CD14-positive monocyte (primary cell): ENCODE measurements at regions of chr1 and their contacts with region 1.

Region 1: GRCh38 chr1:226634166-226634588 is 85.6 kb downstream of the STUM start:
- DNase-seq: peak; percentile 58 to 77 (median 76)
- H3K4me3 ChIP-seq: no peak overlapping the region
- H3K4me3 Mint-ChIP-seq: no peak overlapping the region
- H3K27ac ChIP-seq: peak overlapping the region in 1 of 2 donors; percentile 38
- H3K27ac Mint-ChIP-seq: peak overlapping the region in 4 of 7 donors; percentile 20 to 73 (median 51)
- H3K4me1 ChIP-seq: peaks cover 0 to 9% of the 10 kb centered on the region in 2 donors
- H3K4me1 Mint-ChIP-seq: peaks cover 17% of the 10 kb centered on the region
- H3K27me3 ChIP-seq: no peaks in the 10 kb centered on the region
- H3K27me3 Mint-ChIP-seq: peaks cover 0 to 1% (median 1%) of the 10 kb centered on the region in 3 donors
- CTCF ChIP-seq: peak; percentile 96

Region 2: DNA sequence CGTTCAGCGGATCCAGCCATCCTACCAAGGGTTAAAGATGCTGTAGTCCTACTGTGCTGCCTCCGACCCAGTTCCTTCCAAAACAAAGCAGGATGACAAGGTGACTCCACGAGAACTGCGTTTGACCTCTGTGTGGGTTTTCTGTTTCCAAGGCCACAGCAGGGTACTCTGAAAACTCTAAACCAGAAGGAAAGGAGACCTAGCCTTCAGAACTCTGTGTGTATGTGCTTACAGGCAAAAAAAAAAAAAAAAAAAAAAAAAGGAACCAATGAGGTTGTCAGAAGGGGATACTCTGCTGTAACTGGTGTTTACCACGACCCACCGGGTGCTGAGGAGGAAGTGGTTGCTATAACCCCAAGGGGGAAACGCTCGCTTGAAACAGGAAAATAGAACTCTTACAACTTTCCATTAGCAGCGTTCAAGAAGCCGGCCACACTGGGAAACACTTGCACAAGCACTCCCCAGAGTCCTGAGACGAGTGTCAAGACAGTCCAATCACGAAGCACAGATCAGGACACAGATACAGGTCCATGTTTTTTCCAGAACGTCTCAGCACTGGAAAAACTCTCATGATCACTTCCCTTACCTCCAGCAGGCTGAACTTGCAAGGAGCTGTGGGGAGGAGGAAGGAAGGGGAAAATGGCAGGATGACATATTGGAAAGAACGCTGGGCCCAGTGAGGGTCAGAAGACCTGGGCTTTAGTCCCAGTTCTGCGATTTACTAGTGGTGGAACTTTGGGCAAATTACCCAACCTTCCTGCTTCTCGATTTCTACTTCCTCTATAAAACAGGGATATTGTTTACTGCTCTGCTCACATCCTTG is 40.9 kb after region 1 on chr1:
- intact Hi-C with region 1: no loop called
- DNase-seq: peak; percentile 92 to 96 (median 95)
- H3K4me3 ChIP-seq: peak overlapping the region; percentile 26 to 65 (median 35)
- H3K4me3 Mint-ChIP-seq: peak overlapping the region; percentile 70 to 85
- H3K27ac ChIP-seq: peak overlapping the region; percentile 96 to 99
- H3K27ac Mint-ChIP-seq: peak overlapping the region; percentile 97 to 99 (median 98)
- H3K4me1 ChIP-seq: peaks cover 69 to 70% of the 10 kb centered on the region in 2 donors
- H3K4me1 Mint-ChIP-seq: peaks cover 76% of the 10 kb centered on the region
- H3K27me3 ChIP-seq: no peaks in the 10 kb centered on the region
- H3K27me3 Mint-ChIP-seq: peaks cover 0 to 3% (median 0%) of the 10 kb centered on the region in 3 donors
- CTCF ChIP-seq: no peak

Region 3: DNA sequence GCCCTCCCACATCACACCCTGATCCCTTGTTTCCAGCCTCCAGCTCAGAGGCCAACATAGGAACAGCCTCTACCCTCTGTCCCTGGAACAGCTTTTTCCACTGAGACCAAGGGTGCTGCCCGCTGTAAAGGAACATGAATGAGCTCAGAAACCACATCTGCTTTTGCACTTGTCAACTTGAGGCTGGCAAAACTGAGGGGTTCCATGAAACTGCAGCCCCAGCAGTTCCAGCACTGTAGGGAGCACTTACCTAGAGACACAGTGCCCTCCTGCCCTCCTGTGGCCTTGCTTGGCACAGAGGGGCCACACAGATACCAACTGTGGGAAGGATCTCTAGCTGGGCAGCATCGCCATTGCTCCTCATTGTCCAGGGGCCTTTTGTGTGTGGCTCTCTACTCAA is 53.2 kb after region 1 on chr1:
- intact Hi-C with region 1: loop called (anchors 5 kb)
- DNase-seq: peak; percentile 40 to 55 (median 41)
- H3K4me3 ChIP-seq: no peak overlapping the region
- H3K4me3 Mint-ChIP-seq: no peak overlapping the region
- H3K27ac ChIP-seq: no peak overlapping the region
- H3K27ac Mint-ChIP-seq: peak overlapping the region in 3 of 7 donors; percentile 64 to 80 (median 67)
- H3K4me1 ChIP-seq: no peaks in the 10 kb centered on the region
- H3K4me1 Mint-ChIP-seq: peaks cover 47% of the 10 kb centered on the region
- H3K27me3 ChIP-seq: no peaks in the 10 kb centered on the region
- H3K27me3 Mint-ChIP-seq: peaks cover 0 to 2% (median 0%) of the 10 kb centered on the region in 3 donors
- CTCF ChIP-seq: peak; percentile 34

Region 4: GRCh38 chr1:226736908-226737818 is 103.0 kb after region 1 on chr1:
- intact Hi-C with region 1: loop called (anchors 5 to 10 kb)
- DNase-seq: peak in 2 of 3 donors; percentile 27 to 31
- H3K4me3 ChIP-seq: peak overlapping the region; percentile 68 to 97 (median 89)
- H3K4me3 Mint-ChIP-seq: peak overlapping the region; percentile 97 to 99
- H3K27ac ChIP-seq: peak overlapping the region in 1 of 2 donors; percentile 91
- H3K27ac Mint-ChIP-seq: peak overlapping the region in 2 of 7 donors; percentile 91 to 98
- H3K4me1 ChIP-seq: peaks cover 52 to 54% of the 10 kb centered on the region in 2 donors
- H3K4me1 Mint-ChIP-seq: peaks cover 50% of the 10 kb centered on the region
- H3K27me3 ChIP-seq: no peaks in the 10 kb centered on the region
- H3K27me3 Mint-ChIP-seq: no peaks in the 10 kb centered on the region
- CTCF ChIP-seq: peak; percentile 29

Region 5: GRCh38 chr1:226939438-226940028 is 305.4 kb after region 1 on chr1:
- intact Hi-C with region 1: loop called in 1 of 2 experiments (anchors 10 kb)
- DNase-seq: peak; percentile 71 to 76 (median 72)
- H3K4me3 ChIP-seq: peak overlapping the region; percentile 56 to 83 (median 83)
- H3K4me3 Mint-ChIP-seq: peak overlapping the region; percentile 87 to 93
- H3K27ac ChIP-seq: peak overlapping the region; percentile 96 to 98
- H3K27ac Mint-ChIP-seq: peak overlapping the region; percentile 96 to 98 (median 97)
- H3K4me1 ChIP-seq: peaks cover 36 to 59% of the 10 kb centered on the region in 2 donors
- H3K4me1 Mint-ChIP-seq: peaks cover 59% of the 10 kb centered on the region
- H3K27me3 ChIP-seq: no peaks in the 10 kb centered on the region
- H3K27me3 Mint-ChIP-seq: peaks cover 0 to 2% (median 0%) of the 10 kb centered on the region in 3 donors
- CTCF ChIP-seq: no peak